ENCODE measurements at regions of chr3 and their contacts with region 1.

Region 1: GRCh38 chr3:36944012-36944640 is 728 bp downstream of the TRANK1 start:
- DNase-seq: no peak
- H3K4me3 Mint-ChIP-seq: peak overlapping the region; percentile 69
- H3K27ac Mint-ChIP-seq: no peak overlapping the region
- H3K4me1 Mint-ChIP-seq: no peaks in the 10 kb centered on the region
- H3K27me3 Mint-ChIP-seq: peaks cover 16% of the 10 kb centered on the region

Region 2: GRCh38 chr3:36918050-36918449 is 26.1 kb before region 1 on chr3:
- intact Hi-C with region 1: loop called (anchors 1 kb)
- DNase-seq: no peak
- H3K4me3 Mint-ChIP-seq: peak overlapping the region; percentile 73
- H3K27ac Mint-ChIP-seq: peak overlapping the region; percentile 67
- H3K4me1 Mint-ChIP-seq: peaks cover 24% of the 10 kb centered on the region
- H3K27me3 Mint-ChIP-seq: peaks cover 11% of the 10 kb centered on the region

Measured in activated T-helper 1 cell treated with anti-CD3 and anti-CD28 coated beads, Interleukin-12 subunit alpha, Interleukin-12 subunit beta, Interleukin-2, Interleukin-4 antibody, amounts not matched to agents 30 ng/mL and 10 ng/mL and 1 ng/mL, durations not matched to agents 14 hours and 24 hours and 36 hours (primary cell).